Mammary epithelial cell (primary cell): ENCODE measurements at regions of chr3 and their contacts with region 1.

Region 1: GRCh38 chr3:105366326-105367062 is at the start of gene ALCAM:
- DNase-seq: peak; percentile 99
- H3K4me3 ChIP-seq: peak within 1 kb of the TSS; percentile 75 to 91 (median 82)
- H3K27ac ChIP-seq: peak within 1 kb of the TSS; percentile 98
- H3K4me1 ChIP-seq: peaks cover 39% of the 10 kb centered on the region
- H3K27me3 ChIP-seq: no peaks in the 10 kb centered on the region
- CTCF ChIP-seq: peak; percentile 55 to 82
- total RNA-seq, gene ALCAM: 67.6 to 88.4 TPM

Region 2: GRCh38 chr3:104279617-104280016 is 1086.9 kb before region 1 on chr3:
- CTCF ChIA-PET with region 1: no interaction called
- dilution Hi-C with region 1: no loop called
- in situ Hi-C with region 1: no loop called
- intact Hi-C with region 1: loop called (anchors 1 kb)
- DNase-seq: peak; percentile 90
- H3K4me3 ChIP-seq: peak overlapping the region in 2 of 3 experiments; percentile 33 to 42
- H3K27ac ChIP-seq: peak overlapping the region; percentile 45
- H3K4me1 ChIP-seq: peaks cover 8% of the 10 kb centered on the region
- H3K27me3 ChIP-seq: no peaks in the 10 kb centered on the region
- CTCF ChIP-seq: no peak

Region 3: GRCh38 chr3:104763007-104763406 is 603.5 kb before region 1 on chr3:
- CTCF ChIA-PET with region 1: no interaction called
- dilution Hi-C with region 1: no loop called
- in situ Hi-C with region 1: no loop called
- intact Hi-C with region 1: loop called (anchors 5 kb)
- DNase-seq: no peak
- H3K4me3 ChIP-seq: no peak overlapping the region
- H3K27ac ChIP-seq: no peak overlapping the region
- H3K4me1 ChIP-seq: no peaks in the 10 kb centered on the region
- H3K27me3 ChIP-seq: no peaks in the 10 kb centered on the region
- CTCF ChIP-seq: no peak

Region 4: DNA sequence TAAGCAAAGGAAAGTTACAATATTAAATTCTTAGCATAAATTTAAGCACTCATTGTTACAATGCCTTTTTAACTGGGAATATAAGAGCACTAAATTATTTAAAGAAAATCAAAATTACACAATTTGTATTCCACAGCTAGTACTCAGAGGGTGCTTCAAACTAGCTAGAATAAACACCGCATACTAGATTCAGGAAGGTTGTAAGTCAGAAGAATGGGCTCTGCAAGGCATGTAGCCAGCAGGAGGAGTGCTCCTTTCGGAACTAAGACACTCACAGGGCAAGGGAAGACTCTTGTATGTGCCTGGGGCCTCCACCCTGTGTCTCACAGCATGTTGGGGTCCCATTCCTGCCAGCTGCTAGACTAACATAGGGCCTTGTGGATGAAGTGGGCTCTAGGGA is 327.5 kb before region 1 on chr3:
- CTCF ChIA-PET with region 1: no interaction called
- dilution Hi-C with region 1: no loop called
- in situ Hi-C with region 1: no loop called
- intact Hi-C with region 1: loop called (anchors 5 kb)
- DNase-seq: no peak
- H3K4me3 ChIP-seq: no peak overlapping the region
- H3K27ac ChIP-seq: no peak overlapping the region
- H3K4me1 ChIP-seq: no peaks in the 10 kb centered on the region
- H3K27me3 ChIP-seq: no peaks in the 10 kb centered on the region
- CTCF ChIP-seq: no peak

Region 5: GRCh38 chr3:105274958-105275357 is 91.5 kb before region 1 on chr3:
- CTCF ChIA-PET with region 1: no interaction called
- dilution Hi-C with region 1: no loop called
- in situ Hi-C with region 1: no loop called
- intact Hi-C with region 1: loop called (anchors 1 kb)
- DNase-seq: peak; percentile 83
- H3K4me3 ChIP-seq: no peak overlapping the region
- H3K27ac ChIP-seq: peak overlapping the region; percentile 54
- H3K4me1 ChIP-seq: peaks cover 8% of the 10 kb centered on the region
- H3K27me3 ChIP-seq: no peaks in the 10 kb centered on the region
- CTCF ChIP-seq: no peak

Region 6: DNA sequence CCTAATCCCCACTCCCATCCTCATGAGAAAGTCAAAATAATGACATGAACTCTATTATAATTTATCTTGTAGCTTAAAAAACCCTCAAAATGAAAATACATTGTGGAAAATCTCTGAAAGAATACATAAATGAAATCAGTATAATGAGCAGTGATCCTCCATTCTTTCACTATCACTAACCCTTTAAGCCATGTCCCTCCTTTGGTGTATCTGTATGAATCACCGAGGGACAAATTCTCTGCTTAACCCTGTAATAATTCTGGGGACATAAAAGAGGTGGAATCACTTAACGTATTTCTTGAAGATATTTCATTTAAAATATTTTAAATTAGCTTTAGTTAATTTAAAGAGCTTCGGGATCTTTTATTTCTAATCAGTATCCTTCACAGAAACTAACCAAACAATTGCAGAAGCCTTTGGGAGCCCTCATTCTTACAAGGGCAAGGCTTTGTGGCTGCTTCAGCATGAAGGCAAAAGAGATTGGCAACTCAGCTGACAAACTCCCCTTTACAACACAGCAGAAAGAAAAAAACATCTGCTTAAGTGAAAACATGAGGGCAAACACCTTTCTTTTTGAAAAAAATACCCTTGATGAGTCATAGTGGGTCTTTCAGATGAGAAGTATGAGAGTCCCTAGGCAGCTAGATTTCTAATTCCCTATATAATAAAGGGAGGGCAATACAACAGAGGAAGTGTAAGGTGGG is 43.8 kb before region 1 on chr3:
- CTCF ChIA-PET with region 1: no interaction called
- dilution Hi-C with region 1: no loop called
- in situ Hi-C with region 1: no loop called
- intact Hi-C with region 1: no loop called
- DNase-seq: no peak
- H3K4me3 ChIP-seq: no peak overlapping the region
- H3K27ac ChIP-seq: no peak overlapping the region
- H3K4me1 ChIP-seq: peaks cover 2% of the 10 kb centered on the region
- H3K27me3 ChIP-seq: no peaks in the 10 kb centered on the region
- CTCF ChIP-seq: no peak

Region 7: DNA sequence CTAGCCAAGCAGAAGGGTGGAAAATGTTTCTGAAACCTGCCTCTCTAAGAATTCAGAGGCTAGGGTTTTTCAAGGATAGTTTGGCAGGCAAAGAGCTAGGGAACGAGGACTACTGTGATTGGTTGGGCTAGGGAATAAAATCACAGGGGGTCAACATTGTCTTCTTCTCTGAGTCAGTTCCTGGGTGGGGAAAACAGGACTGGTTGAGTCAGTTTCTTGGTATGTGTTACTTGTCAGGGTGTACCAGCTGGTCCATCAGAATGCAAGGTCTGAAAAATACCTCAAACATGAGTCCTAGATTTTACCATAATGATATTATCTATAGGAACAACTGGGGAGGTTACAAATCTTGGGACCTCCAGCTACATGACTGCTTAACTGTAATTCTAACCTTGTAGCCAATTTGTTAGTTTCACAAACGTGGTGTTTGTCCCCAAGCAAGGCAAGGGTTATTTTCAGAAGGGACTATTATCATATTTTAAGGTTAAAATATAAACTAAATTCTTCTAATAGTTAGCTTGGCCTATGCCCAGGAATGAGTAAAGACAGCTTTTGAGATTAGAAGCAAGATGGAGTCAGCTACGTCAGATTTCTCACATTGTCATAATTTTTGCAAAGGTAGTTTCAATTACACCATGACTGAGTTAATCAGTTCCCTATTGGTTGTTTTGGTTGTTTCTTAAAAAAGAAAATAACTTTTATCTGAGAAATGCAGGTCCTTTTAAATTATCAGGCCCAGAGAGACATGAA is 231.7 kb after region 1 on chr3:
- CTCF ChIA-PET with region 1: interaction called, 3 read pairs
- dilution Hi-C with region 1: no loop called
- in situ Hi-C with region 1: no loop called
- intact Hi-C with region 1: loop called (anchors 10 kb)
- DNase-seq: peak; percentile 90
- H3K4me3 ChIP-seq: no peak overlapping the region
- H3K27ac ChIP-seq: peak overlapping the region; percentile 59
- H3K4me1 ChIP-seq: peaks cover 26% of the 10 kb centered on the region
- H3K27me3 ChIP-seq: no peaks in the 10 kb centered on the region
- CTCF ChIP-seq: no peak